AG04450 (cell line): ENCODE measurements at regions of chr2 and their contacts with region 1.

Region 1: GRCh38 chr2:40488101-40488601 is 36.3 kb upstream of the SLC8A1 start:
- DNase-seq: no peak
- H3K4me3 ChIP-seq: no peak overlapping the region
- H3K27ac ChIP-seq: no peak overlapping the region
- H3K27me3 ChIP-seq: no peaks in the 10 kb centered on the region
- CTCF ChIP-seq: peak; percentile 61

Region 2: GRCh38 chr2:39171621-39172020 is 1316.5 kb before region 1 on chr2:
- CTCF ChIA-PET with region 1: no interaction called
- POLR2A ChIA-PET with region 1: no interaction called
- DNase-seq: no peak
- H3K4me3 ChIP-seq: no peak overlapping the region
- H3K27ac ChIP-seq: no peak overlapping the region
- H3K27me3 ChIP-seq: no peaks in the 10 kb centered on the region
- CTCF ChIP-seq: no peak

Region 3: DNA sequence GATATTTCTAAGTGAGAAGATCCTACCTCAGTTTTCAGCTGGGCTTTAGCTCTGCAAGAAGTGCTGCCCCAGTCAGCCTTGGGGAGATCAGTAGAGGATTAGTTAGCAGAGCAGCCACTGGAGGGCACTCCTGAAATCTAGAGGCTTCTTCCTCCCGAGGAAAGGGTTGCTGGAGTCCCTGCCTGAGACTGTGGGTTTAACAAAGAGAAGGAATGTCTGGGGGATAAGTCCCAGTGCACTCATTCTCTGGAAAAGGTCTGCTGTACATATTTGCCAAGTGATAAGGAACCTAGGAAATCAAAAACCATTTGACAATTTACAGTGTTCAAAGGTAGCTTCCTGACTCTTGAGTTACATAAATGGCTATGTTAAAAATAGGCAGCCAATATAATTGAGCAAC is 243.5 kb before region 1 on chr2:
- CTCF ChIA-PET with region 1: interaction called, 12 read pairs
- POLR2A ChIA-PET with region 1: no interaction called
- DNase-seq: no peak
- H3K4me3 ChIP-seq: no peak overlapping the region
- H3K27ac ChIP-seq: no peak overlapping the region
- H3K27me3 ChIP-seq: no peaks in the 10 kb centered on the region
- CTCF ChIP-seq: peak; percentile 71

Region 4: GRCh38 chr2:40455661-40456060 is 32.5 kb before region 1 on chr2:
- CTCF ChIA-PET with region 1: interaction called, 12 read pairs
- POLR2A ChIA-PET with region 1: no interaction called
- DNase-seq: no peak
- H3K4me3 ChIP-seq: no peak overlapping the region
- H3K27ac ChIP-seq: no peak overlapping the region
- H3K27me3 ChIP-seq: no peaks in the 10 kb centered on the region
- CTCF ChIP-seq: no peak

Region 5: GRCh38 chr2:40554668-40555285 is 66.6 kb after region 1 on chr2:
- CTCF ChIA-PET with region 1: interaction called, 14 read pairs
- POLR2A ChIA-PET with region 1: no interaction called
- DNase-seq: no peak
- H3K4me3 ChIP-seq: no peak overlapping the region
- H3K27ac ChIP-seq: no peak overlapping the region
- H3K27me3 ChIP-seq: no peaks in the 10 kb centered on the region
- CTCF ChIP-seq: peak; percentile 74

Region 6: GRCh38 chr2:40760071-40760666 is 272.0 kb after region 1 on chr2:
- CTCF ChIA-PET with region 1: interaction called, 12 read pairs
- POLR2A ChIA-PET with region 1: no interaction called
- DNase-seq: peak; percentile 29
- H3K4me3 ChIP-seq: no peak overlapping the region
- H3K27ac ChIP-seq: no peak overlapping the region
- H3K27me3 ChIP-seq: no peaks in the 10 kb centered on the region
- CTCF ChIP-seq: peak; percentile 98

Region 7: DNA sequence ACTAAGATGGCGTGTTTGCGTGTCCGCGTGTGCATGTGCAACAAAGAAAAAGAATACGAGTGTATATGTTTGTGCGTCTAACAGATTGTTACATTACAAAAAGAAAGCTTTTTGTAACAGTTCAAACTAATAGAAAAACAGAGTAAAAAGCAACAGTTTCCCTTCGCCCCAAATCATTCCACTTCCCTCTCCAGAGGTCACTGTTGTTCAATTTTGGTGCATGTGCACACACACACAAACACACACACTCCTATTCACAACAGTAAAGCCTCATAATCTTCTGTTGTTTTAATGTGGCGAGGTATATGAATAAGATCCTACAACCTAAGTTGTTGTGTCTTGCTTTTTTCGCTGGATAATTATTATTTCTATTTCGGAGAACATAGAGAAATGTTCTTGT is 321.0 kb after region 1 on chr2:
- CTCF ChIA-PET with region 1: no interaction called
- POLR2A ChIA-PET with region 1: no interaction called
- DNase-seq: no peak
- H3K4me3 ChIP-seq: no peak overlapping the region
- H3K27ac ChIP-seq: no peak overlapping the region
- H3K27me3 ChIP-seq: peaks cover 3% of the 10 kb centered on the region
- CTCF ChIP-seq: no peak